ENCODE measurements at regions of chr6 and their contacts with region 1.

Region 1: GRCh38 chr6:45260696-45261095 is 67.4 kb upstream of the RUNX2 start:
- DNase-seq: no peak
- ATAC-seq: no peak
- H3K4me3 ChIP-seq: no peak overlapping the region
- H3K27ac ChIP-seq: no peak overlapping the region
- H3K4me1 ChIP-seq: no peaks in the 10 kb centered on the region
- H3K27me3 ChIP-seq: no peaks in the 10 kb centered on the region
- CTCF ChIP-seq: no peak
- POLR2A ChIP-seq: no peak

Region 2: GRCh38 chr6:44917430-44917829 is 343.3 kb before region 1 on chr6:
- in situ Hi-C with region 1: no loop called
- intact Hi-C with region 1: no loop called
- DNase-seq: no peak
- ATAC-seq: no peak
- H3K4me3 ChIP-seq: no peak overlapping the region
- H3K27ac ChIP-seq: no peak overlapping the region
- H3K4me1 ChIP-seq: no peaks in the 10 kb centered on the region
- H3K27me3 ChIP-seq: no peaks in the 10 kb centered on the region
- CTCF ChIP-seq: no peak
- POLR2A ChIP-seq: no peak

Region 3: DNA sequence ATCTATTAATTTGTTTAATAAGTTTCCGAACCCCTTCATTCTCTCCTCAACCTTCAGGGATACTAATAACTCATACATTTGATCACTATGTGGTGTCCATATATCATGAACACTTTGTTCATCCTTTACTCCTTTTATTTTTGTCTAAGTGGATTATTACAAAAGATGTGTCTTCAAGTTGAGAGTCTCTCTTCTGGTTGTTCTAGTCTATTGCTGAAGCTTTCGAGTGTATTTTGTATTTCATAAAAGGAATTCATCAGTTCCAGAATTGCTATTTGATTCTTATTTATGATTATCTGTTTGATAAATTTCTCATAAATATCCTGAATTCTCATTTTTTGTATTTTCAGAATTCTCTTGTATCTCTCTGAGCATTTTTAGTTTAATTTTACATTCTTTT is 29.0 kb before region 1 on chr6:
- in situ Hi-C with region 1: no loop called
- intact Hi-C with region 1: loop called (anchors 1 kb)
- DNase-seq: no peak
- ATAC-seq: no peak
- H3K4me3 ChIP-seq: no peak overlapping the region
- H3K27ac ChIP-seq: no peak overlapping the region
- H3K4me1 ChIP-seq: no peaks in the 10 kb centered on the region
- H3K27me3 ChIP-seq: no peaks in the 10 kb centered on the region
- CTCF ChIP-seq: no peak
- POLR2A ChIP-seq: no peak